PC-9 (cell line): ENCODE measurements at regions of chr9 and their contacts with region 1.

Region 1: GRCh38 chr9:22211593-22212360 is 202.7 kb upstream of the CDKN2B start:
- DNase-seq: peak; percentile 33 to 93
- H3K4me3 ChIP-seq: no peak overlapping the region
- H3K27ac ChIP-seq: peak overlapping the region; percentile 95
- H3K4me1 ChIP-seq: peaks cover 63% of the 10 kb centered on the region
- H3K27me3 ChIP-seq: no peaks in the 10 kb centered on the region
- CTCF ChIP-seq: no peak

Region 2: GRCh38 chr9:22008736-22009562 is 202.8 kb before region 1 on chr9 and contains the start of gene CDKN2B:
- CTCF ChIA-PET with region 1: no interaction called
- POLR2A ChIA-PET with region 1: interaction called, 4 read pairs
- intact Hi-C with region 1: loop called (anchors 5 kb)
- DNase-seq: peak; percentile 86 to 94
- H3K4me3 ChIP-seq: peak within 1 kb of the TSS; percentile 100
- H3K27ac ChIP-seq: peak within 1 kb of the TSS; percentile 92
- H3K4me1 ChIP-seq: peaks cover 29% of the 10 kb centered on the region
- H3K27me3 ChIP-seq: no peaks in the 10 kb centered on the region
- CTCF ChIP-seq: peak; percentile 82
- total RNA-seq, gene CDKN2B: 33.8 and 40.2 TPM in 2 replicates

Region 3: DNA sequence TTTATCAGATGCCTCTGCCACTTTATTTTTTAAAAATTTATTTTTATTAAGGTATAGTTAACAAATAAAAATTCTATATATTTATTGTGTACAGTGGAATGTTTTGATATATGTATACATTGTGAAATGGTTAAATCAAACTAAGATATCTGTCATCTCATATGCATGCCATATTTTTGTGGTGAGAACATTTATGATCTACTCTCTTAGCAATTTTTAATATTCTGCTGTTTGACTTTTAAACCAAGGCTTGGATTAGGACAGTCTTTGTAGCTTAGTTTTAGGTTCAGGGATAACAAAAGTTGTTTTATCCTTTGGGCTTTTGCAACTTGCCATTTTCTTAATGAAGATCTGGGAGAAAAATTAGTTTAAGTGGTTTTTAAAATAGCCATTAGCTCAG is 156.7 kb before region 1 on chr9:
- CTCF ChIA-PET with region 1: no interaction called
- POLR2A ChIA-PET with region 1: interaction called, 10 read pairs
- intact Hi-C with region 1: no loop called
- DNase-seq: no peak
- H3K4me3 ChIP-seq: no peak overlapping the region
- H3K27ac ChIP-seq: no peak overlapping the region
- H3K4me1 ChIP-seq: peaks cover 27% of the 10 kb centered on the region
- H3K27me3 ChIP-seq: no peaks in the 10 kb centered on the region
- CTCF ChIP-seq: no peak

Region 4: GRCh38 chr9:22103650-22104575 is 107.9 kb before region 1 on chr9:
- CTCF ChIA-PET with region 1: no interaction called
- POLR2A ChIA-PET with region 1: interaction called, 9 read pairs
- intact Hi-C with region 1: loop called (anchors 1 kb)
- DNase-seq: peak in 1 of 2 experiments; percentile 51
- H3K4me3 ChIP-seq: peak overlapping the region; percentile 18; the same call in 1 of the 2 replicates
- H3K27ac ChIP-seq: peak overlapping the region; percentile 94
- H3K4me1 ChIP-seq: peaks cover 53% of the 10 kb centered on the region
- H3K27me3 ChIP-seq: no peaks in the 10 kb centered on the region
- CTCF ChIP-seq: no peak

Region 5: GRCh38 chr9:22158927-22159346 is 52.8 kb before region 1 on chr9:
- CTCF ChIA-PET with region 1: interaction called, 3 read pairs
- POLR2A ChIA-PET with region 1: interaction called, 5 read pairs
- intact Hi-C with region 1: loop called (anchors 5 kb)
- DNase-seq: peak; percentile 41 to 96
- H3K4me3 ChIP-seq: no peak overlapping the region
- H3K27ac ChIP-seq: peak overlapping the region; percentile 99
- H3K4me1 ChIP-seq: peaks cover 47% of the 10 kb centered on the region
- H3K27me3 ChIP-seq: no peaks in the 10 kb centered on the region
- CTCF ChIP-seq: no peak